Tibial artery (tissue), 4 donors: ENCODE measurements at regions of chr13 and their contacts with region 1.

Region 1: GRCh38 chr13:110225609-110226562 is 81.1 kb downstream of the COL4A1 start:
- DNase-seq: no peak
- H3K4me3 ChIP-seq: no peak overlapping the region
- H3K27ac ChIP-seq: peak overlapping the region; percentile 38 to 91
- H3K4me1 ChIP-seq: peaks cover 0 to 80% (median 36%) of the 10 kb centered on the region in 4 donors
- H3K27me3 ChIP-seq: no peaks in the 10 kb centered on the region
- CTCF ChIP-seq: no peak

Region 2: GRCh38 chr13:110294624-110295023 is 68.7 kb after region 1 on chr13:
- intact Hi-C with region 1: no loop called
- DNase-seq: no peak
- H3K4me3 ChIP-seq: no peak overlapping the region
- H3K27ac ChIP-seq: peak overlapping the region; percentile 53 to 99
- H3K4me1 ChIP-seq: peaks cover 12 to 99% (median 41%) of the 10 kb centered on the region in 4 donors
- H3K27me3 ChIP-seq: no peaks in the 10 kb centered on the region
- CTCF ChIP-seq: no peak

Region 3: DNA sequence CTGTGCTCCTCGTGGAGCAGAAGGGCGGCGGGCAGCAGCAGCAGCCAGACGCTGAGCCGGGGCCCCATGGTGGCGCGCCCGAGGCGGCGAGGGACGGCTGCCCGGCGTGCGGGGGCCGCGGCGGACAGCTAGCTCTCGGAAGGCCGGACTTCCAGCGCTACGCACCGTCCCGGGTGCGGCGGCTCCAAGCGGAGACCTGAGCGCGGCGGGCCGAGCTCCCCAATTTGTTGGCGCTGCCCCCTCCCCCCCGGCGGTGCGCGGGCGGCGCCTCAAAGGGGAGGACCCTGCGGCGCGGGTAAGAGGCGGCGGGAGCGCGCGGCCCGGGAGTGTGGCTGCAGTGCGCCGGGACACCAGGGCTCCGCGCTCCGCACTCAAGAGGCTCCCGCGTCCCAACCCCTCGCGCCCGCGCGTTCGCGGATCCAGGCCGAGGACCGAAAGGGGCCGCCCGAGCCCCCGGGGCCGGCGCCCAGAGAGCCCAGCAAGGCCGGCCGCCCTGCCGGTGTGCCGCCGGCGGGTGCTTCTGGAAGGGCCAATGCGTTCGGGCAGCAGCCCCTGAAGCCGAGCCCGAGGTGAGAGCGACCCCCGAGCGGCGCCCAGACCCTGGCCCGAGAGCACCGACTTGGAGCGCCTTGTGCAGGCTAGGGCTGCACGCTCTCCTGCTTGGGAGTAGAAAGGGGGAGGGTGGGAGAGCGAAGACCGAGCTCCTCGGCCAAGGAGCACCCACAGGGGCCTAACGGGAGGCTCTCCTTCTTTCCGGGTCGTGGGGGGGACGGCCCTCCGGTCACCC is 81.3 kb after region 1 on chr13 and contains the starts of genes COL4A1 and COL4A2:
- intact Hi-C with region 1: loop called (anchors 10 kb)
- DNase-seq: peak; percentile 78 to 92
- H3K4me3 ChIP-seq: peak within 1 kb of the TSS; percentile 79 to 97
- H3K27ac ChIP-seq: peak within 1 kb of the TSS; percentile 96 to 99
- H3K4me1 ChIP-seq: peaks cover 0 to 63% (median 43%) of the 10 kb centered on the region in 4 donors
- H3K27me3 ChIP-seq: no peaks in the 10 kb centered on the region
- CTCF ChIP-seq: peak in 1 of 2 experiments; percentile 1